Ascending aorta (tissue), 2 donors: ENCODE measurements at regions of chr11 and their contacts with region 1.

Region 1: DNA sequence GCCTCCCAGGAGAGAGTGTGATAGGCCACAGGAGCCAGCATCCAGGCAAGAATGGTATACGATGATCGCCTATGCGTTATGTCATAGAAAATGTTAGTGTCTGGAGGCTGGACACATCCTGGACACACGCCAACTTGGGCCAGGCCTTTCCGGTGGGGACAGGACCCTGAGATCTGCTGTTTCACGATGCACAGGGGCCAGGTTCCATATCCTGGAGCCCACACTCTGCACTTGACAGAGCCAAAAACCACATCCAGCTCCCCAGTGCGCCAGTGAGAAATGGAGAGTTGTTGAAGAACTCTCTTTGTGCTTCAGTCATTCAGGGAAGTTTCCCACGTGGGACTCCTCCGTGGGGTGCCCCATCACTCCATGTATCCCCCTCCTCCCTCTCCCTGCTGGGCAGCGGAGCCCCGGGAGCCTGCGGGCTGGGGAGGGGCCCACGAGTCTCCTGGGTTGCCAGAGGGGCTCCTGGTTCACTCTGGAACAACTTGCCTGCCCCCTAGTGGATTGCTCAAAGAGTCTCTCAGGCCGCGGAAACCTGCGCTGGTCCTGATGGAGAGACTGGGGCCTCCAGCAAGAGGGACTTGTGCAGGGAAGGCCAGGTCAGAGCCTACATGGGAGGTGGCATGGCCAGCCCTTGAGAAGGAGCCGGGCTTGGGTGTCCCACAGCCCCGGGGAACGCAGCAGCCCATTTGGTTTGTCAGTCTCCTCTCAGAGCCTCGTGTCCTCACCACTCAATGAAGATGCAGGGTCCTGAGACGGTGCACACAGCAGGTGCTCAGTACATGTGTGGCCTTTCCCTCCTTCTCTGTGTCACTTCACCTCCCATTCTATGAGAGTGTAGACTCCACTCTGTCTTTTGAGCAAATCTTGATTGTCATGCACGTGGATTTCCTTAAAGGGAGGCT is 10.2 kb upstream of the LRRC32 start:
- DNase-seq: peak in 1 of 2 donors; percentile 83
- H3K4me3 ChIP-seq: peak overlapping the region; percentile 6 to 13
- H3K27ac ChIP-seq: no peak overlapping the region
- H3K4me1 ChIP-seq: peaks cover 0 to 5% of the 10 kb centered on the region in 2 donors
- H3K27me3 ChIP-seq: no peaks in the 10 kb centered on the region
- CTCF ChIP-seq: peak; percentile 85 to 93 (median 86)

Region 2: DNA sequence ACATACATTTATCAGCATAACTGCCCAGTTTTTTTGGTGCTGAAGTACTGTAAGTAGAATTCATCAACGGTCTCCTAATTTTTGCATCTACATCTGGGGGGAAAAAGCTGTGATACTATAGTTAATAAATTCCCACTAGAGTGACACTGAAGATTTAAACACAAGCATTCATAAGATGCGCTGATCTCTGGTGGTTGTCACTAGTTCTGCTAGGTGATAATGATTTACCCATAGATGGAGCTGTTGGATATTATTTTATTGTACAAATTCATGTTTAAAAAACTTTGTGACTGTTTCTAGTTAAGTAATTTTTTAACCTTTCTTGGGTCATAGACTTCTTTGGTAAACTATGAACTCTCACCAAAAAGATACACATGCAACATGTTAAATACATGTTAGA is 129.4 kb before region 1 on chr11:
- intact Hi-C with region 1: loop called (anchors 1 kb)
- DNase-seq: no peak
- H3K4me3 ChIP-seq: no peak overlapping the region
- H3K27ac ChIP-seq: no peak overlapping the region
- H3K4me1 ChIP-seq: no peaks in the 10 kb centered on the region
- H3K27me3 ChIP-seq: no peaks in the 10 kb centered on the region
- CTCF ChIP-seq: peak in 2 of 3 experiments; percentile 4 to 40

Region 3: GRCh38 chr11:76598426-76598839 is 82.3 kb before region 1 on chr11:
- intact Hi-C with region 1: loop called (anchors 1 kb)
- DNase-seq: peak in 1 of 2 donors; percentile 75
- H3K4me3 ChIP-seq: no peak overlapping the region
- H3K27ac ChIP-seq: no peak overlapping the region
- H3K4me1 ChIP-seq: no peaks in the 10 kb centered on the region
- H3K27me3 ChIP-seq: no peaks in the 10 kb centered on the region
- CTCF ChIP-seq: peak; percentile 47 to 70 (median 56)

Region 4: DNA sequence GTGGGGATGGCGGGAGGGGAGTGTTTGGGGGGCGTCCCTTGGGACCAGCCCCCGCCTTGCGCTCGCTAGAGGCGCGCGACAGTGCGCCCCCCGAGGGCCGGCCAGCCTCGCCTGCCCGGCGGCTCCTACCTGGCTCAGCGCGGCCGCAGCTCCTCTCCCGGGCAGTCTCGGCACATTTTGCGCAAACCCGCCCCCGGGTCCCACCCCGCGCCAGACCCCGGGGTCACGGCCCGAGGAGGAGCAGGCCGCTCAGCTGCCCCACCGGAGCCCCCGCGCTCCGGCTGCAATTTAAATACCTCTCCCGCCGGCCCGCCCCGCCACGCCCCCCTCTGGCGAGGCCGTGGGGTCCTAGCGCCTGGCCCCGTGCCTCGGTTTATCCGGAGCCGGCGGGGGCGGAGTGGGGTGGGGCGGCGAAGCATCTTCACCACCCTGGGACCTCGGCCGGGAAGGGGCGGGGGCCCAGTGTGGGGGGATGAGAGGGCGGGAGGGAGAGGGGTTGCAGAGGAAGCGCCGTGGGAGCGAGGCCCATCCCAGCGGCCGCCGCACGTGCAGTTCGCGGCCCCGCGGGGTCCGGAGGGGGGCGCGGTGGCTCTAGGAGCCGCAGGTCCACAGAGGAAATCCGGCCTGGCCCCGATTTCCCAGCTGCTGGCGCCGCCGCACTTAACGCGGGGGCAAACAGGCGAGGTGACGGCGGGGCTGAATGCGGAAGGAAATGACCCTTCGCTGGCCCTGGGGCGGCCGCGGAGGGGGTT is 10.1 kb before region 1 on chr11 and contains the start of gene LRRC32:
- intact Hi-C with region 1: no loop called
- DNase-seq: peak in 1 of 2 donors; percentile 79
- H3K4me3 ChIP-seq: peak within 1 kb of the TSS; percentile 86 to 95
- H3K27ac ChIP-seq: peak within 1 kb of the TSS; percentile 83 to 91
- H3K4me1 ChIP-seq: peaks cover 18 to 33% of the 10 kb centered on the region in 2 donors
- H3K27me3 ChIP-seq: no peaks in the 10 kb centered on the region
- CTCF ChIP-seq: peak in 1 of 3 experiments; percentile 15
- total RNA-seq, gene LRRC32: 280 TPM